Calu3 (cell line): ENCODE measurements at regions of chr15 and their contacts with region 1.

Region 1: GRCh38 chr15:80309769-80310384 is 57.9 kb upstream of the CTXND1 start:
- DNase-seq: peak; percentile 48
- H3K4me3 Mint-ChIP-seq: no peak overlapping the region
- H3K27ac Mint-ChIP-seq: no peak overlapping the region
- H3K4me1 Mint-ChIP-seq: no peaks in the 10 kb centered on the region
- H3K27me3 Mint-ChIP-seq: peaks cover 44% of the 10 kb centered on the region
- CTCF ChIP-seq: peak; percentile 31

Region 2: GRCh38 chr15:80081390-80081789 is 228.5 kb before region 1 on chr15:
- CTCF ChIA-PET with region 1: no interaction called
- intact Hi-C with region 1: loop called (anchors 10 kb)
- DNase-seq: no peak
- H3K4me3 Mint-ChIP-seq: no peak overlapping the region
- H3K27ac Mint-ChIP-seq: no peak overlapping the region
- H3K4me1 Mint-ChIP-seq: peaks cover 12% of the 10 kb centered on the region
- H3K27me3 Mint-ChIP-seq: no peaks in the 10 kb centered on the region
- CTCF ChIP-seq: no peak

Region 3: DNA sequence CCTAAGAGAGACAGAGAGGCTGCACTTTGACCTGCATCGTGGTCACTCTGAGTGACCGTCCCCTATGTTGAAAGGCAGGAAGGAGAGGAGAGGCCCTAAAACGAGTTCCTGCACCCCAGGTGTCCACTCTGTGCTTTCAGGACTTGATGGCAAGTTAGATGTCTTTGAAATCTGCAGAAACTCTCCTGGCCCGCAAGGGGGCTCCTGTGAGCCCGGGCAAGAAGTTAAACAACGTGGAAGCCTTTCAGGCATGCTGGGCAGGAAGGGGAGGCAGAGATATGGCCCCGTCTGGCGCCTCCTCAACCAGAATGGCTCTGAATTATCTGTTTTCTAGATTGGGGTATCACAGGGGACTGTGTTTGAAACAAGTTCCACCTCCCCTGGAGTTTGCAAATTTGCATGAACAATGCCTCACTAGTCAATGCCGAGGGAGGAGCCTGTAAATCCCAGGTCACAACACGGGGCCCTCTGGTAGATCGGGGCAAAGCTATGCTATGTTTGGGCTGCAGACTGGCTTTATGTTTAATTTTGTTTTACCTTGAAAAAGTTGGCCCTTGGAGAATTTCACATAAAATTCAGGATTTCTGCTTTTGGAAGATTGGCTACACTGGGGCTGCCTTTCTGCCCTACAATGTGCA is 67.6 kb before region 1 on chr15:
- CTCF ChIA-PET with region 1: interaction called, 4 read pairs
- intact Hi-C with region 1: loop called (anchors 1 kb)
- DNase-seq: peak; percentile 60
- H3K4me3 Mint-ChIP-seq: no peak overlapping the region
- H3K27ac Mint-ChIP-seq: no peak overlapping the region
- H3K4me1 Mint-ChIP-seq: peaks cover 14% of the 10 kb centered on the region
- H3K27me3 Mint-ChIP-seq: peaks cover 82% of the 10 kb centered on the region
- CTCF ChIP-seq: peak; percentile 79